ENCODE measurements at regions of chr10 and their contacts with region 1.

Region 1: GRCh38 chr10:80444646-80445319 is 9.3 kb upstream of the TSPAN14 start:
- DNase-seq: peak; percentile 79
- H3K4me3 Mint-ChIP-seq: no peak overlapping the region
- H3K27ac Mint-ChIP-seq: no peak overlapping the region
- H3K4me1 Mint-ChIP-seq: peaks cover 42% of the 10 kb centered on the region
- H3K27me3 Mint-ChIP-seq: no peaks in the 10 kb centered on the region

Region 2: DNA sequence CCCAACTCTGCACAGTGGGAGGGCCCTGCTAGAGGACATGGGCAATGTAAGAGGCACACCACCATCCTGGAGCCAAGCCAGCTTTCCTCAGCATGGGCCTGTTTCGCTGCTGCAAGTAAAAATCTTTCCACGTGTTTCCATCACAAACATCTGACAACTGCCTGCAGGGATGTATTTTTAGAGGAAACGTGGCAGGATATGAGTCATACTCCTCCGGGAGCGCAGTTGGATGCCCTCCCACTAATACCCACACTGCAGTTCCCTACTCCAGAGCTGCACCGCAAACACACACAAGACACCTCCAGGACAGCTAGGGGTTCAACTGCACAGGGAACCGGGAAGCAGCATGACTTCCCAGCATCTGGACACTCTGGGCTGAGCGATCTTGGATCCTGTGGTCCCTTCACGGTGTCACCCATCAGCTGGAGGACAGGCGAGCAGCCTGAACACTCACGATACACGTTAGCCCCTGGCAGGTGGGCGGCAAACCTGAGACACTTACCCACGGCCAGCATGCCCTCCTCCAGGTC is 286.1 kb before region 1 on chr10:
- CTCF ChIA-PET with region 1: no interaction called
- POLR2A ChIA-PET with region 1: no interaction called
- DNase-seq: no peak
- H3K4me3 Mint-ChIP-seq: no peak overlapping the region
- H3K27ac Mint-ChIP-seq: peak overlapping the region; percentile 10
- H3K4me1 Mint-ChIP-seq: peaks cover 3% of the 10 kb centered on the region
- H3K27me3 Mint-ChIP-seq: no peaks in the 10 kb centered on the region

Region 3: DNA sequence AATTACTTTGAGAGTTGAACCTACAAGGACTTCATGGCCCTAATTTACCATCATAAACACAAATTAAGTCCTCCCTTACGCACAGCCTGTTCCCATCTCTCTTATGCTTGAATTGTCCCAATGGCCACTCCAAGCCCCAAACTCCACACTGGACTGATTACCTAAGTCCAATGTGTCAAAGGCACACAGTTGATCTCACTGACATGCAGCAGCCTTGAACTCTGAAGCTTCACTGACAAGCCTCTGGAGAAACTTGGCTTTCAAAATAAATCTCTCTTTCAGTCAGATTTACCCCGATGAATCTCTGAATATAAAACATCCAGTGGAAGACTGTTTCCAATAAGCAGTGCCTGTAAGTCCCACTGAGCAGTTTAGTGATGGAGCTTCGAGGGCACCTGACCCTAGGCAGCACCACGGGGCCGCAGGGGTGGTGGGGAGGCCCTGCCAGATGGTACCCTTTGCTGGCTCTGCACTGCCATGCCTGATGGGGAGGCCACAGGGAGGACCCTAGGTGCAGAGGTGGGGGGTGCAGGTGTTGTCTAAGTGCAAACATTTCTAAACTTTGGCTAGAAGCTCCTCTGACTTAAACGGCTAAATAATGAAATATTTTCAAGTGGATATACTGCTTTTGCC is 152.1 kb before region 1 on chr10:
- CTCF ChIA-PET with region 1: no interaction called
- POLR2A ChIA-PET with region 1: no interaction called
- DNase-seq: no peak
- H3K4me3 Mint-ChIP-seq: no peak overlapping the region
- H3K27ac Mint-ChIP-seq: no peak overlapping the region
- H3K4me1 Mint-ChIP-seq: no peaks in the 10 kb centered on the region
- H3K27me3 Mint-ChIP-seq: peaks cover 26% of the 10 kb centered on the region

Region 4: DNA sequence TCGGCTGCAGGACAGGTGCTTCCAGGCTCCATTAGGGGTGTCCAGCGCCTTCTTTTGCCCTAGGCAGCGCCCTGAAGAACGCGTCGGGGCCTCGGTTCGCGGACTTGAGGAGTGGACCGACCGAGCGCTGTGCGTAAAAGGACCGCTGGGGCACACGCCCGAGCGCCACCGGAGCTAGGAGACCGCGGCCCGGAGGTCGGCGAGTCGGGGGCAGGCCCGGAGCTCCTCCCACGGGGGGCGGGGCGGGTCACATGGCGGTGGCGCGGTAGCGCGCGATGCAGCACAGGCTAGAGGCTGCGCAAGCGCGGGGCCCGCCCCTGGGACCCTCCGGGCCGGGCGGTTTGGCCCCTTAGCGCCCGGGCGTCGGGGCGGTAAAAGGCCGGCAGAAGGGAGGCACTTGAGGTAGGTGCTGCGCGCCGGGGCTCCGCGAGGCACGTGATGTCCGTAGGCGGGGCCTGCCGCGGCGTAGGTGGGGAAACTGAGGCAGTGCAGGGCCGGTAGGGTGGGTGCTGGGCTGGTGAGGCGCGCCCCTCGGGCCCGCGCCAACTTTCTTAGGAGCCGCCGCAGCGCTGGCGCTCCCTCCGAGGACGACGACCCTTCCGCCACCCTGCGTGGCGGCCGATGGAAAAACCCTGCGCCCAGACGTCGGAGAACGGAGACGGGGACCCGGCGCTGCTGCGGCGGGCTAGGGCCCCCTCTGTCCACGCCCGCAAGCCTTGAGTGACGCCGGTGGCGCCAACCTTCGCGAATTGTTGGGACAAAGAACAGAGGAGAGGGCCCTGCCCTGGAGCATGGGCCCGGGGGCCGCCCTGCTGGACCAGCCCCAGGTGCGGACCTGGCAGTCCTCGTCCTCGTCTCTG is 36.3 kb before region 1 on chr10 and contains the start of gene PRXL2A:
- CTCF ChIA-PET with region 1: interaction called, 10 read pairs
- POLR2A ChIA-PET with region 1: no interaction called
- DNase-seq: peak; percentile 74
- H3K4me3 Mint-ChIP-seq: peak within 1 kb of the TSS; percentile 69
- H3K27ac Mint-ChIP-seq: no peak within 1 kb of the TSS
- H3K4me1 Mint-ChIP-seq: peaks cover 9% of the 10 kb centered on the region
- H3K27me3 Mint-ChIP-seq: peaks cover 22% of the 10 kb centered on the region
- total RNA-seq, gene PRXL2A: 4.5 to 5.2 TPM

Region 5: DNA sequence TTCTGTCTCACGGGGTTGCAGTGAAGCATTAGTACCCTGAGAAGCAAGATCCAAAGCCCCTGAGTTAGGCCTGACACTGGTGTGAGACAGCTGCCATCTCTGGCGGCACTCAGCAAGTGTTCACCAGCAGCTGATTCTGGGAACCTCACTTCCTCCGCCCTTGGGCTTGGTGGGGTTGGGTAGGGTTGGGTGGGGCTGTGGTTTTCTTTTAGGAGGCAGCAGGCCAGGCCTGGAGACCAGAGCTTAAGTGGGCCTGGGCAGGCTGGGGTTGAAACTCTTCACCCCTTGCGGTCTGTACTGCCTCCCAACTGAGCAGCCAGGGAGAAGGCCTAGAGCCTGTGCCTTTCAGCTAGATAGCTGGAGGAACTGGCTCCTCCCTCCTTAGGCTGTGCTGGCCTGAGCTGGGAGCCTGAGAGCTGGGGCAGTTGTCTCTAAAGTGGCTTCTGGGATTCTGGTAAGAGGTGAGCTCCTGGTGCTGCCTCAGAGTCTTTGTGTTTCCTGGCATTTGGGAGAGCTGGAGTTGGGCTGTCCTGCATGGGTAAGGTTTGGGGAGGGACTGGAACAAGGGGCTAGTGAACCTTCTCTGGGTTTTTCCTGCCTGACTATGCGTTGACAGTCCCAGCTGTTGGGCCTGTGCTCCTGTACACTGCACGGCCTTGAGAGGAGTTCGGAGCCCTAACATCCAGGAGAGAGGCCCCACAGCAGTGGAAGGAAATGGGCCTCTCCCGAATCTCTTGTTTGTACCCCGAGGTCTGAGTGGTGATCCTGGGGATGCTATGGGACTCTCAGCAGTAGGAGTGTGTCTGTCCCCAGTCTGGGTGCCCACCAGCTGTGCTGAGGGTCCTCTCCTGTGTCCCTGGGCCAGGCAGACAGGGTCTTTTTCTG is 14.5 kb after region 1 on chr10:
- CTCF ChIA-PET with region 1: interaction called, 38 read pairs
- POLR2A ChIA-PET with region 1: interaction called, 17 read pairs
- DNase-seq: peak; percentile 88
- H3K4me3 Mint-ChIP-seq: peak overlapping the region; percentile 94
- H3K27ac Mint-ChIP-seq: peak overlapping the region; percentile 97
- H3K4me1 Mint-ChIP-seq: peaks cover 85% of the 10 kb centered on the region
- H3K27me3 Mint-ChIP-seq: no peaks in the 10 kb centered on the region

Region 6: DNA sequence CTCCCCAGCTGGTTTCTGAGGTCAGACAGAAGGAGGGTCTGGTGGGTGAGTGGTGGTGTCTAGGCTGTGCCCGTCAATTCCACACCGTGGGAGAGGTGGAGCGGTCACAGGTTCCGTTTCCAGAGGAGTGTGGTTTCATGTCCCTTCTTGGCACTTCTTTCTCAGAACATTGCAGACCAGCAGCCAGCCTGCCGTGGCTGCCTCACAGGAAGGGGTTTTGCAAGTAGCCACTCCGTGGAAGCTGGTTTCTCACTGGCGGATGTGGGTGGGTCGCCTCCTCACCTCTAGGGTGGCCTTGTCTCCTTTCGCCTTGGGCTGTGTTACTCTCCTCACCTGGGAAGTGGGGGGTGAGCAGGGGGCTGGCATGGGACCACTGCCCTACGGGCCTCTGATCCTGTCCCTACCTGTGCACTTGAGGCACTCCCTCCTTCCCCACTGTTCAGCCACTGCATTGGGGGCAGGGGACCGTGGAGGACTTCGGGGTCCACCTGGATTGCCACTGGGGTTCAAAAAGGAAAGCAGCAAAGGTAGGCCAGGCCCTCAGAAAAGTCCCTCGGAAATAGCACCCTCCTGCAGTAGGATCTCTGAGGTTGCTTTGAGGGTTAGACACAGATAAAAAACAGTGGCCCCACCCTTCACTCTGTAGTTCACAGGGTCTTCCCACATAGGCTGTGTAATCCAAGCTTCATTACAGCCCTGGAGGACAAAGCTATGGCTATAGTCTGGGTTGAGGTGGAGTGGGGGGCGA is 43.2 kb after region 1 on chr10:
- CTCF ChIA-PET with region 1: interaction called, 15 read pairs
- POLR2A ChIA-PET with region 1: interaction called, 6 read pairs
- DNase-seq: peak; percentile 86
- H3K4me3 Mint-ChIP-seq: peak overlapping the region; percentile 75
- H3K27ac Mint-ChIP-seq: peak overlapping the region; percentile 91
- H3K4me1 Mint-ChIP-seq: peaks cover 98% of the 10 kb centered on the region
- H3K27me3 Mint-ChIP-seq: no peaks in the 10 kb centered on the region

Region 7: DNA sequence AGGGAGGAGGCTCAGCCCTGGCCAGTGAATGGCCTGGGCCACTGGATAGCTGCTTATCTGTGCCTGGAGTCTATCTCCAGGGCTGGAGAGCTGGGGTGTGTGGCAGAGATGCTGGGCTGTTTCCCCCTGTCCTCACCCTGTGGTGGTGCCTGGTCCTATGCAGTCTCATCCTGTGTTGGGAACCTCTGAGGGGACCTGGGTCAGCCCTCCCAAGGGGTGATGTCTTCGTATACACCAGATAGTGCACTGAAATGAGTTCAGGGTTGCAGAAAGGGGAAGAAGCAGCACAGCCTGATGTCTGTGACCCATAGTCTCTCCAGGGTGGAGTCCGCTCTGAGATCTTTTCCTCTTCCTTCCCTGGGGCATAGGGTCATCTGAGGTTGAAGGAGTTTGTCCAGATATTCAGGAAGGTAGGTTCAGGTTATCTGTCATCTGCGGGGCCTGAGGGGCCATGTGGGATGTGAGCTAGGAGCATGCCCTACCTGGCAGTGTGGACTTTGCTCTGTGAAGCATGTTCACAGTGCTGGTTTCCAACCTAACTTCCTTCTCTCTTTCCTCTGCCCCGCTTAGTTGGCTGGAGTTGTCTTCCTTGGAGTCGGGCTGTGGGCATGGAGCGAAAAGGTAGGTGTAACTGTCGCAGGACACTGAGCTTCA is 59.5 kb after region 1 on chr10:
- CTCF ChIA-PET with region 1: interaction called, 318 read pairs
- POLR2A ChIA-PET with region 1: interaction called, 22 read pairs
- DNase-seq: no peak
- H3K4me3 Mint-ChIP-seq: no peak overlapping the region
- H3K27ac Mint-ChIP-seq: peak overlapping the region; percentile 74
- H3K4me1 Mint-ChIP-seq: peaks cover 67% of the 10 kb centered on the region
- H3K27me3 Mint-ChIP-seq: no peaks in the 10 kb centered on the region

Region 8: GRCh38 chr10:80530251-80530650 is 85.5 kb after region 1 on chr10:
- CTCF ChIA-PET with region 1: interaction called, 25 read pairs
- POLR2A ChIA-PET with region 1: interaction called, 4 read pairs
- DNase-seq: peak; percentile 56
- H3K4me3 Mint-ChIP-seq: peak overlapping the region; percentile 43
- H3K27ac Mint-ChIP-seq: peak overlapping the region; percentile 92
- H3K4me1 Mint-ChIP-seq: peaks cover 70% of the 10 kb centered on the region
- H3K27me3 Mint-ChIP-seq: no peaks in the 10 kb centered on the region

Region 9: GRCh38 chr10:80662577-80663261 is 217.9 kb after region 1 on chr10:
- CTCF ChIA-PET with region 1: interaction called, 10 read pairs
- POLR2A ChIA-PET with region 1: no interaction called
- DNase-seq: peak; percentile 67
- H3K4me3 Mint-ChIP-seq: no peak overlapping the region
- H3K27ac Mint-ChIP-seq: no peak overlapping the region
- H3K4me1 Mint-ChIP-seq: no peaks in the 10 kb centered on the region
- H3K27me3 Mint-ChIP-seq: peaks cover 6% of the 10 kb centered on the region